ENCODE measurements at regions of chr19 and their contacts with region 1.

Region 1: GRCh38 chr19:48553676-48554386 is 1.9 kb downstream of the SULT2B1 start:
- DNase-seq: peak; percentile 69
- ATAC-seq: peak; percentile 11
- H3K4me3 ChIP-seq: peak overlapping the region; percentile 26 to 60 (median 26); a peak in 3 of 6 replicates
- H3K27ac ChIP-seq: peak overlapping the region; percentile 26
- H3K4me1 ChIP-seq: peaks cover 92% of the 10 kb centered on the region
- H3K27me3 ChIP-seq: peaks cover 0 to 15% of the 10 kb centered on the region in 2 experiments; a peak in 3 of 5 replicates
- CTCF ChIP-seq: no peak
- EP300 ChIP-seq: peak in 1 of 2 experiments; percentile 47; a peak in 2 of 4 replicates
- POLR2A ChIP-seq: no peak
- RAD21 ChIP-seq: no peak

Region 2: GRCh38 chr19:48518207-48518606 is 35.6 kb before region 1 on chr19:
- CTCF ChIA-PET with region 1: no interaction called
- POLR2A ChIA-PET with region 1: interaction called, 3 read pairs
- in situ Hi-C with region 1: no loop called
- intact Hi-C with region 1: loop called (anchors 5 kb)
- DNase-seq: no peak
- ATAC-seq: no peak
- H3K4me3 ChIP-seq: no peak overlapping the region
- H3K27ac ChIP-seq: no peak overlapping the region
- H3K4me1 ChIP-seq: peaks cover 21% of the 10 kb centered on the region
- H3K27me3 ChIP-seq: no peaks in the 10 kb centered on the region
- CTCF ChIP-seq: no peak
- EP300 ChIP-seq: no peak
- POLR2A ChIP-seq: no peak
- RAD21 ChIP-seq: no peak